ENCODE measurements at regions of chr20 and their contacts with region 1.

Region 1: GRCh38 chr20:18137412-18138265 is at the starts of genes KAT14 and PET117:
- DNase-seq: peak; percentile 91
- ATAC-seq: peak; percentile 90
- H3K4me3 Mint-ChIP-seq: peak within 1 kb of the TSS; percentile 89
- H3K27ac Mint-ChIP-seq: peak within 1 kb of the TSS; percentile 89
- H3K4me1 Mint-ChIP-seq: peaks cover 29% of the 10 kb centered on the region
- H3K27me3 Mint-ChIP-seq: peaks cover 4% of the 10 kb centered on the region
- total RNA-seq, gene KAT14: 14.5 to 16.0 TPM
- total RNA-seq, gene PET117: 11.0 to 12.9 TPM

Region 2: DNA sequence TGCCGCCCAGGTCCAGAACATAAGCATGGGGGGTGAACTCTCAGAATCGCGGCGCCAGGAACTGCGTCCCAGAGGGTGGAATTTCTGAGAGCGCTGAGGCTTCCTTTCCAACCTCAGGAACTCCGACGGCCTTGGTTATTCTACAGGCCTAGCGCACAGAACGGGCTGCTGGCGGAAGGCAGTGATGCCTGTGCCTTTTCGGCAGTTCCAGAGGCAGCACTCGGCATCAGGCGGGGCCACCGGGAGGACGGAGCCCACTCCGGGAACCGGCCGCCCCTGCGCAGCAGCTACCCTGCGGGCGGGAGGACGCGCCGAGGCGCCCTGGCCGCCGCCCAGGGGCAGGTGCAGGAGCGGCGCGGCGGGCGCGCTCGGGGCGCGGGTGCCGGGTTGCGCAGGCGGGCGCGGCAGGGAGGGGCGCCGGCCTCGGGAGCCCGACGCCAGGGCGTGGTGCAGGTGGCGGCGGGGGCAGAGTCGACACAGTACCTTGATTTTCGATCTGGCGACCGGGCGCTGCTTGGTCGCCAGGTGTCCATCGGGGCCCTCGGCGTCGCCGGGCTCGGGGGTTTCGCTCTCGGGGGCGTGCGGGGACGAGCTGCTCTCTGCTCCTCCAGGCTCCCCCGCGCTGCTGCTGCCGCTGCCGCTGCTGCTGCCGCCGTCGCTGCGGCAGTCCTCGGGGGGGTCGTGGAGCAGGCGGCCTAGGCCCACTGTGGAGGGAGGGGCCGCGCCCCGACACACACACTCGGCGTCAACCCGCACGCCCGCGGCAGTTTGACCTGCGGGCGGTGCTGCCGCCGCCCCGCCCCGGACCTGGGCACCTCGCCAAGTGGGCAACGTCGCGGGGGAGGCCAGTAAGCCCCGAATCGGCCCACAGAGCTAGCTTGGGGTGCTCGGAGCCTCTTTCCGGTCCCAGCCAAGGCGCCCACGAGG is 81.2 kb before region 1 on chr20:
- CTCF ChIA-PET with region 1: no interaction called
- POLR2A ChIA-PET with region 1: no interaction called
- DNase-seq: no peak
- ATAC-seq: peak; percentile 63
- H3K4me3 Mint-ChIP-seq: peak overlapping the region; percentile 38
- H3K27ac Mint-ChIP-seq: no peak overlapping the region
- H3K4me1 Mint-ChIP-seq: peaks cover 15% of the 10 kb centered on the region
- H3K27me3 Mint-ChIP-seq: peaks cover 62% of the 10 kb centered on the region

Region 3: GRCh38 chr20:18213002-18213401 is 75.4 kb after region 1 on chr20:
- CTCF ChIA-PET with region 1: no interaction called
- POLR2A ChIA-PET with region 1: no interaction called
- DNase-seq: no peak
- ATAC-seq: no peak
- H3K4me3 Mint-ChIP-seq: no peak overlapping the region
- H3K27ac Mint-ChIP-seq: no peak overlapping the region
- H3K4me1 Mint-ChIP-seq: no peaks in the 10 kb centered on the region
- H3K27me3 Mint-ChIP-seq: peaks cover 4% of the 10 kb centered on the region

Region 4: GRCh38 chr20:18287915-18288748 is 150.5 kb after region 1 on chr20 and contains the start of gene ZNF133:
- CTCF ChIA-PET with region 1: interaction called, 3 read pairs
- POLR2A ChIA-PET with region 1: interaction called, 10 read pairs
- DNase-seq: peak; percentile 97
- ATAC-seq: peak; percentile 98
- H3K4me3 Mint-ChIP-seq: peak within 1 kb of the TSS; percentile 95
- H3K27ac Mint-ChIP-seq: peak within 1 kb of the TSS; percentile 99
- H3K4me1 Mint-ChIP-seq: peaks cover 19% of the 10 kb centered on the region
- H3K27me3 Mint-ChIP-seq: peaks cover 20% of the 10 kb centered on the region
- total RNA-seq, gene ZNF133: 6.0 to 7.2 TPM

Region 5: GRCh38 chr20:18428490-18429173 is 291.0 kb after region 1 on chr20:
- CTCF ChIA-PET with region 1: no interaction called
- POLR2A ChIA-PET with region 1: no interaction called
- DNase-seq: no peak
- ATAC-seq: no peak
- H3K4me3 Mint-ChIP-seq: no peak overlapping the region
- H3K27ac Mint-ChIP-seq: no peak overlapping the region
- H3K4me1 Mint-ChIP-seq: no peaks in the 10 kb centered on the region
- H3K27me3 Mint-ChIP-seq: no peaks in the 10 kb centered on the region

Measured in activated CD8-positive, alpha-beta T cell treated with anti-CD3 and anti-CD28 coated beads, Interleukin-2, amount 10 ng/mL, durations not matched to agents 7 days and 5 days (primary cell).